Esophagus squamous epithelium (tissue), 5 donors: ENCODE measurements at regions of chr5 and their contacts with region 1.

Region 1: DNA sequence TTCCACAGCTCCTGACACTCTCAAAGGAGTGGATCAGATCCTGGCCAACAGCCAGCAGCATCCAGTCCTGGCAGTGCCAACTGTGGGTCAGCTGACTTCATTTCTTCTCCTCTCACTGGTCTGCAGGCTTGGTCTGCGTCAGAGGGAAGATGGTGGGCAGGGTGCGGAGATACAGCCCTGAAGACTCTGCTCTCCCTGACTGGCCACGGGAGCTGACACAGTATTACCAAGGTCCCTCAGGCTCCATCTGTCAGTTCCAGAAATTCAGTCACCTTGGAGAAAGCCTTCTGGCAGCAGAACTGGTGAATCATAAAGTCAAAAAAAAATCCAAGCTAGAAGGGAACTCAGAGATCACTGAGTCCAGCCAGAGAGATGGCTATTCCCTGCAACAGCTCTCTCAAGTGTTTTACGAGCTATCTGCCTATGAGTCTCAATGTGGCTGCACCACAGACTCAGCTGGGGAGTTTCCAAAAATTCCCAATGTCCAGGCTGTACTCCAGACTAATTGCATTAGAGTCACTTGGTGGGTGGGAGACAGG is 28.0 kb downstream of the C1QTNF2 start:
- DNase-seq: no peak
- H3K4me3 ChIP-seq: no peak overlapping the region
- H3K27ac ChIP-seq: no peak overlapping the region
- H3K4me1 ChIP-seq: peaks cover 0 to 17% (median 7%) of the 10 kb centered on the region in 3 donors
- H3K27me3 ChIP-seq: no peaks in the 10 kb centered on the region
- CTCF ChIP-seq: no peak
- POLR2A ChIP-seq: no peak

Region 2: DNA sequence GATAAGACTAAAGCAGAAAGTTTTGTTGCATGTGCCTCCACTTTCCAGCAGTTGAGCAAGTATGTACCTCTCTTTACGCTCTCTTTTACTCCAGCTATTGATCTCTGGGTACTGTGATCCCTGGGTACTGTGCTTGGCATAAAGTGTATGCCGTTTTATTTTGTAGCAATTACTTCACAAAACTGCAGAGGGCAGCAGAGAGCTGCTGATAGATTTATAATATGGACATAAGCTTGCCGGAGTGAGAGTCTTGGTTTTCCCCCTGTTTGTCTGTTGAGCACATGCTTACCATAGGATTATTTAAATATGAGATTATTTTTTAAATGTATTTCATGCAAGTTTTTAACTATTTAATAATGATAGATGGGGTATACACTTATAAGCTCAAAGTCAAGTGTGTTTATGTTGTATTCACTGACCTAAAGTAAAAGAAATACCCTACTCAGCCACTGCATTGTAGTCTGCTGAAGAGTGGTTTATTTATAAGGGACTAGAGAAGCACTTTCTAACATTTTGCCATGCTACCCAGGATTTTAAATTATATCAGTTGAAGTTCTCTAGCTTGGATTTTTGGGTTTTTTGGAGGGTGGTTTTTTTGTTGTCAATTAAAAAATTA is 320.5 kb before region 1 on chr5:
- intact Hi-C with region 1: loop called (anchors 10 kb)
- DNase-seq: no peak
- H3K4me3 ChIP-seq: no peak overlapping the region
- H3K27ac ChIP-seq: peak overlapping the region in 1 of 4 donors; percentile 1
- H3K4me1 ChIP-seq: peaks cover 0 to 23% (median 3%) of the 10 kb centered on the region in 3 donors
- H3K27me3 ChIP-seq: no peaks in the 10 kb centered on the region
- CTCF ChIP-seq: peak; percentile 45 to 87 (median 80)
- POLR2A ChIP-seq: no peak

Region 3: DNA sequence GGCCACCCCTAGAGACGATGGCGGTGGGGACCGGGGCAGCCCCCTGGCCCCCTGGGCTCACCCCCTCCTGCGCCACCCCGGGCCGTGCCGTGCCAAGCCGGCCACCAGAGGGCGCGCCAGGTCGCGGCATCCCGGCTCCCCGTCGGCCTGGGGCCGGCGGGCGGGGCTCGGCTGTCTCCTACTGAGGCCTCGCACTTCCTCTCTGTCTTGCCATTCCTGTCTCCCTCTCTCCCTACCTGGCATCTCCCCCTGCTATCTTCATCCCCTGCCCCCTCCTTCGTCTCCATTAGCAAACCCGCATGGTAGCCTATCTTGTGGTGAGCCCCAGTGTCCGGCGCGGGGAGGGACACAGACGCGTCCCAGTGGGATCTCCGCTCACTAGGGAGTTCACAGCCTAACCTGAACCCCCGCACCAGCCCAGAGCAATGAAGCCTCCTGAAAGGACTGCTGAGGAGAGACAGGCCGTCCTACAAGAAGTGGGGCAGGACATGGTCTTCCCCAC is 143.0 kb before region 1 on chr5:
- intact Hi-C with region 1: loop called (anchors 2 kb)
- DNase-seq: peak; percentile 12
- H3K4me3 ChIP-seq: peak overlapping the region; percentile 2 to 63 (median 45)
- H3K27ac ChIP-seq: peak overlapping the region in 1 of 4 donors; percentile 52
- H3K4me1 ChIP-seq: peaks cover 4 to 16% (median 9%) of the 10 kb centered on the region in 3 donors
- H3K27me3 ChIP-seq: no peaks in the 10 kb centered on the region
- CTCF ChIP-seq: peak; percentile 83 to 96 (median 94)
- POLR2A ChIP-seq: no peak